ENCODE measurements at regions of chr2 and their contacts with region 1.

Region 1: GRCh38 chr2:27703638-27704341 is 40.1 kb downstream of the SLC4A1AP start:
- DNase-seq: peak; percentile 90
- H3K4me3 ChIP-seq: no peak overlapping the region
- H3K27ac ChIP-seq: no peak overlapping the region
- H3K4me1 ChIP-seq: peaks cover 17% of the 10 kb centered on the region
- H3K27me3 ChIP-seq: no peaks in the 10 kb centered on the region
- CTCF ChIP-seq: peak; percentile 82 to 88
- POLR2A ChIP-seq: no peak

Region 2: GRCh38 chr2:27509326-27509725 is 194.5 kb before region 1 on chr2:
- CTCF ChIA-PET with region 1: no interaction called
- POLR2A ChIA-PET with region 1: no interaction called
- dilution Hi-C with region 1: no loop called
- intact Hi-C with region 1: no loop called
- DNase-seq: no peak
- H3K4me3 ChIP-seq: no peak overlapping the region
- H3K27ac ChIP-seq: no peak overlapping the region
- H3K4me1 ChIP-seq: no peaks in the 10 kb centered on the region
- H3K27me3 ChIP-seq: no peaks in the 10 kb centered on the region
- CTCF ChIP-seq: no peak
- POLR2A ChIP-seq: no peak

Region 3: GRCh38 chr2:27527182-27527581 is 176.6 kb before region 1 on chr2:
- CTCF ChIA-PET with region 1: no interaction called
- POLR2A ChIA-PET with region 1: no interaction called
- dilution Hi-C with region 1: no loop called
- intact Hi-C with region 1: no loop called
- DNase-seq: no peak
- H3K4me3 ChIP-seq: no peak overlapping the region
- H3K27ac ChIP-seq: no peak overlapping the region
- H3K4me1 ChIP-seq: peaks cover 4% of the 10 kb centered on the region
- H3K27me3 ChIP-seq: no peaks in the 10 kb centered on the region
- CTCF ChIP-seq: no peak
- POLR2A ChIP-seq: no peak

Region 4: DNA sequence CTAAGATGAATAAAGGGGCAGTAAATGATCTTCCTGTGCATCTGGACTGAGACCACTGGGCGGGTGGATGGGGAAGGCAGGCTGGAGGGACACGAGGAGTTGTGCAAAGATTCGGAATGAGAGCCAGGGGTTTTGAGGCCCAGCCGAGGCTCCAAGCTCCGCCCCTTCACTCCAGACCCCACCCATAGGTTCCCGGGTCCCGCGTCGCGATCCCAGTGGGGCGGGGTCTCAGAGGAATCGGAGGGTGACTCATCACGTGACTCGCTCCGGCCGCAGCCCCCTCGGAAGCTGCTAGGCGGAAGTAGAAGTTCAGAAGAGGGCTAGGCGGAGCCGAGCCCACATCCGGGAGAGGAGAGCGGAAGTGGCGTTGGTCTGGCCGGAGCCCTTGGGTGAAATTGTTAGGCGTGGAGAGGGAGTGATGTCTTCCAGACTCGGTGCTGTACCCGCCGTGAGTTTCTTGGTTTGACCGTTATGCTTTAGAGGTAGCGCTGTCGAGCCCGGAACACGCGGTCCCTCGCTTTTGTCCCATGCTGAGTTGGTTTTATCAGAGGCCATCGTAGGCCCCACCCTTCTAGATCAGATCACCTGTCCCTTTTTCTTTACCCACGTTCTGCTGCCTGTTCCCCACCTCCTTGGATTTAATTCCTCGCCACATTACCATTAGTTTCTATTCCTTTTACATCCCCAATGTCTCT is 120.9 kb before region 1 on chr2 and contains the start of gene ZNF512:
- CTCF ChIA-PET with region 1: no interaction called
- POLR2A ChIA-PET with region 1: no interaction called
- dilution Hi-C with region 1: no loop called
- intact Hi-C with region 1: no loop called
- DNase-seq: peak; percentile 89
- H3K4me3 ChIP-seq: peak within 1 kb of the TSS; percentile 51 to 98 (median 94)
- H3K27ac ChIP-seq: peak within 1 kb of the TSS; percentile 77
- H3K4me1 ChIP-seq: peaks cover 24% of the 10 kb centered on the region
- H3K27me3 ChIP-seq: no peaks in the 10 kb centered on the region
- CTCF ChIP-seq: peak in 1 of 2 donors; percentile 7
- POLR2A ChIP-seq: peak; percentile 91
- total RNA-seq, gene ZNF512: 28.0 and 37.0 TPM in 2 replicates

Region 5: DNA sequence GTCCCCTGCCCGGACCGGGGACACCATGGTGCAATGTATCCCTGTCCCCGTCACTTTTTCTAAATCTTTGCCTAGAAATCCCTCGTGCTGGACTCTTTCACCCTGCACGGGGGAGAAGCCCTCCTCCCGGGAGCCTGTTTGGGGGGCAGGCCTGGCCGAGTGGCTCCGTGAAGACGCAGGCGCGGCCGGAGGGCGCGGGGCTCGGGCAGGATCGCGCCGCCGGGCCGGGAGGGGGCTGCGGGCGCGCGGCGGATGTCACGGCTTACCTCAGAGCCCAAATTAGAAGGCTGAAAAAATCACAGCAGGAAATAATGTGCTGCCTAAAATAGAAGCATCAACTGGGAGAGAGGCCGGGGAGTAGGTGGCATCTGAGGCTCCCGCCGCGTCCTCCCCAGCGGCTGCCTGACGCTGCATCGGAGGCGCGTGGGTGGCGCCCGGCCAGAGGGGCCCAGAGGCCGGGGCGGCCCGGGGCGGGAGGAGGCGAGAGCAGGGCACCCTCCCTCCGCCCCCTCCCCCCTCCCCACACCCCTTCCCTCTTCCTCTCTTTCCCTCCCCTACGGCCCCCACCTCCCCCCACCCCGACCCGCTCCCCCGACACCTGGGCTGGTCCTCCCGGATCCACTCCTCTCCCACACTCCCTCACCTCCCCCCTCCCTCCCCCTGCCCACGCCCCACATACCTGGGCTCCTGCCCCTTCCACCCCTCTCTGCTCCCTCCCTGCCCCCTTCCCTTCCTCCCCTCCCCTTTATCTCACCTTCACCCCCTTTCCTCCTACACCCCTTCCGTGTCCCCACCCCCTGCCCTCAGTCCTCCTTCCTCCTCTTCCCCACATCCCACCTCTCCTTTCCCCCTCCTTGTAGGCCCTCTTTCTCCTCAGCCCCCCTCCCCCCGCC is 11.8 kb after region 1 on chr2:
- CTCF ChIA-PET with region 1: interaction called, 11 read pairs
- POLR2A ChIA-PET with region 1: no interaction called
- dilution Hi-C with region 1: no loop called
- intact Hi-C with region 1: no loop called
- DNase-seq: no peak
- H3K4me3 ChIP-seq: peak overlapping the region; percentile 31 to 44 (median 31)
- H3K27ac ChIP-seq: peak overlapping the region; percentile 14
- H3K4me1 ChIP-seq: peaks cover 14% of the 10 kb centered on the region
- H3K27me3 ChIP-seq: no peaks in the 10 kb centered on the region
- CTCF ChIP-seq: no peak
- POLR2A ChIP-seq: no peak

Region 6: GRCh38 chr2:27735263-27735953 is 31.6 kb after region 1 on chr2:
- CTCF ChIA-PET with region 1: interaction called, 6 read pairs
- POLR2A ChIA-PET with region 1: no interaction called
- dilution Hi-C with region 1: no loop called
- intact Hi-C with region 1: loop called (anchors 1 kb)
- DNase-seq: peak; percentile 46
- H3K4me3 ChIP-seq: peak overlapping the region in 2 of 3 experiments; percentile 7 to 20
- H3K27ac ChIP-seq: peak overlapping the region; percentile 35
- H3K4me1 ChIP-seq: peaks cover 31% of the 10 kb centered on the region
- H3K27me3 ChIP-seq: no peaks in the 10 kb centered on the region
- CTCF ChIP-seq: no peak
- POLR2A ChIP-seq: peak; percentile 34

Region 7: GRCh38 chr2:27798948-27799645 is 95.3 kb after region 1 on chr2:
- CTCF ChIA-PET with region 1: interaction called, 3 read pairs
- POLR2A ChIA-PET with region 1: interaction called, 3 read pairs
- dilution Hi-C with region 1: no loop called
- intact Hi-C with region 1: loop called (anchors 5 kb)
- DNase-seq: peak; percentile 93
- H3K4me3 ChIP-seq: no peak overlapping the region
- H3K27ac ChIP-seq: peak overlapping the region; percentile 94
- H3K4me1 ChIP-seq: peaks cover 34% of the 10 kb centered on the region
- H3K27me3 ChIP-seq: no peaks in the 10 kb centered on the region
- CTCF ChIP-seq: no peak
- POLR2A ChIP-seq: no peak

Region 8: DNA sequence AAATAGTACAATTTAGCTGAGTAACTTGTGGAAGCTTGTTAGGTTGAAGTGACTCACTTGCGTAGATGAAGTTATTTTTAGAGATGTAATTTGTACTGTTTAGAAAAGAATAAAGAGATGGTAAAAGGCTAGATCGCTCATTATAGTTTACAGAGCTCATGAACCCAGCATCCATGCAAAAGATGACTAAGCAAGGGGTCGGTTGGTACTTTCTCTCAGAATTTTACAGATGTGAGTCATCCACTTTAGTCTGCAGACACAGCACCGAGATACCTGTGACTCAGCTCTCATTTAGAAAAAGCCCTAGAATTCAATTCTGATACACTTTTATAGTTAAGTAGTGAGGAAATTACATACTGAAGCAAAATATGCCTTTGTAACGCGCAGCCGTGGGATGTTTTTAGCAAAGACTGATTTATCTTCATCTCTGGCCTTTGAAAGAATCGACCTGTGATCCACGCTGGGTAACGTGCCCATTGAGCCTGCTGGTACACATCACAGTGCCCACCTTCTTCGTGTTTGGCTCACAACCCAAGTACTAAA is 572.4 kb after region 1 on chr2:
- CTCF ChIA-PET with region 1: no interaction called
- POLR2A ChIA-PET with region 1: no interaction called
- dilution Hi-C with region 1: no loop called
- intact Hi-C with region 1: loop called (anchors 5 kb)
- DNase-seq: peak; percentile 96
- H3K4me3 ChIP-seq: no peak overlapping the region
- H3K27ac ChIP-seq: peak overlapping the region; percentile 98
- H3K4me1 ChIP-seq: peaks cover 29% of the 10 kb centered on the region
- H3K27me3 ChIP-seq: no peaks in the 10 kb centered on the region
- CTCF ChIP-seq: no peak
- POLR2A ChIP-seq: no peak

Region 9: GRCh38 chr2:28452534-28453081 is 748.8 kb after region 1 on chr2:
- CTCF ChIA-PET with region 1: interaction called, 13 read pairs
- POLR2A ChIA-PET with region 1: no interaction called
- dilution Hi-C with region 1: no loop called
- intact Hi-C with region 1: loop called (anchors 1 kb)
- DNase-seq: peak; percentile 58
- H3K4me3 ChIP-seq: no peak overlapping the region
- H3K27ac ChIP-seq: no peak overlapping the region
- H3K4me1 ChIP-seq: peaks cover 14% of the 10 kb centered on the region
- H3K27me3 ChIP-seq: no peaks in the 10 kb centered on the region
- CTCF ChIP-seq: peak; percentile 94 to 96
- POLR2A ChIP-seq: no peak

Region 10: DNA sequence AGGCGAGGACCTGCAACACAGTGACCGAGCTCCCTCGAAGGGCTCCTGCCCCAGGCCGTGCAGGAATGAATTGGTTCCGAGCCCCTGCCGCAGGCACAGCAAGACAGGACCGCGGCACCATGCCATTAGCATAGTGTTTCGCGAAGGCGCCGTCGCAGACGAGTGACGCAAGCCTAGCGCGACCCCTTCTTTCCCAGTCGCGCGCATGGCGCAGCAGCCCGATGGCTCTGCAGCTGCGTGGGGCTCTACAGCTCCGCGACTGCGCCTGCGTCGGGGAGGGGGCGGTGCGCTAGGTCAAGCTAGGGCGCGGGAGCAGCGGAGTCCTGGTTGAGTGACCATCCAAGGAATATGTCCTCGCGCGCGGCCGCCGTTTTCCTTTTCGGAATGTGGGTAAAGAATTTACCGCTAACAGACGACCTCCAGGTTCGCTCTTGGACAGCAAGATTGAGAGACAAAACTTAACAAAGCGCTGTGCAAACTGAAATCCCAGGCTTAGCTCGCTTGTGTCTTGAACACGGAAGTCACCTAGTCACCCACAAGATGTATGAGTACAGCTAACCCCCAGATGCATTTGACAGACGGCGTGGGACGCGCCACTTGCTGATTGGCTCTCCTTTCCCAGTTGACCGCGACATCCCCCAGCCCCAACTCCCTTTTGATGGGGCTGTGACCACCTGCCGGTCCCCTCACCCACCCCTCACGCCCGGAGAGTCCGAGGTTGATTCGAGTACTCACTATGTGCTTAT is 1166.5 kb after region 1 on chr2 and contains the start of gene TRMT61B:
- CTCF ChIA-PET with region 1: no interaction called
- POLR2A ChIA-PET with region 1: no interaction called
- dilution Hi-C with region 1: no loop called
- intact Hi-C with region 1: no loop called
- DNase-seq: peak; percentile 96
- H3K4me3 ChIP-seq: peak within 1 kb of the TSS; percentile 78 to 89 (median 85)
- H3K27ac ChIP-seq: peak within 1 kb of the TSS; percentile 62
- H3K4me1 ChIP-seq: peaks cover 12% of the 10 kb centered on the region
- H3K27me3 ChIP-seq: no peaks in the 10 kb centered on the region
- CTCF ChIP-seq: no peak
- POLR2A ChIP-seq: peak; percentile 90
- total RNA-seq, gene TRMT61B: 13.6 and 14.9 TPM in 2 replicates